Gastrocnemius medialis (tissue), 4 donors: ENCODE measurements at regions of chr11 and their contacts with region 1.

Region 1: DNA sequence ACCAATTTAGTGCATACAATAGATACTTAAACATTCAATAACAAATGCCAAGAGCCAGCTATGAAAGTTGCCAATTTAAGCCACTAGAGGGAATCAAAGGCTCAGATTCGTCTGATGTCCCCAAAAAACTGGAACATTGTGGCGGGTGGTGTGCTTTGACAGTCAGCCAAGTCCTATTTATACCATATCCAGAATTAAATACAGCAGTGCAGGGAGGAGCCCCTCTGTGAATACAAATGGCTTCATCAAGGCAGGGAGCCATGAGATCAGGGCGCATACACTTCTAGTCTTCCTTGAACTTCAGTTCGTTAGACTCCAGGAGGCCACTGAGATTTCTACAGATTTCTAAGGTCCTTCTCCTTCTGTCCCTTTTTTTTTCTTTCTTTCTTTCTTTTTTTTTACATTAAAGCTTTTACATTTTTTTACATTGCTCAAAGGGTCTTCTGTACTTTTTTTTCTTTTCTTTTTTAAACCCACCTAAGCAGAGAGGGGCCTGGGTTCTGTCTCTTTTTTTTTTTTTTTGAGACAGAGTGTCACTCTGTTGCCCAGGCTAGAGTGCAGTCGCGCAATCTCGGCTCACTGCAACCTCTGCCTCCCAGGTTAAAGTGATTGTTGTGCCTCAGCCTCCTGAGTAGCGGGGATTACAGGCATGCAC is 41.5 kb upstream of the HSPA8 start:
- DNase-seq: peak; percentile 33 to 48
- ATAC-seq: peak; percentile 64 to 65
- H3K4me3 ChIP-seq: no peak overlapping the region
- H3K27ac ChIP-seq: peak overlapping the region in 2 of 4 donors; percentile 34 to 48
- H3K4me1 ChIP-seq: peaks cover 14 to 16% of the 10 kb centered on the region in 2 donors
- H3K27me3 ChIP-seq: no peaks in the 10 kb centered on the region
- CTCF ChIP-seq: peak in 4 of 5 experiments; percentile 42 to 68 (median 51)
- POLR2A ChIP-seq: no peak

Region 2: DNA sequence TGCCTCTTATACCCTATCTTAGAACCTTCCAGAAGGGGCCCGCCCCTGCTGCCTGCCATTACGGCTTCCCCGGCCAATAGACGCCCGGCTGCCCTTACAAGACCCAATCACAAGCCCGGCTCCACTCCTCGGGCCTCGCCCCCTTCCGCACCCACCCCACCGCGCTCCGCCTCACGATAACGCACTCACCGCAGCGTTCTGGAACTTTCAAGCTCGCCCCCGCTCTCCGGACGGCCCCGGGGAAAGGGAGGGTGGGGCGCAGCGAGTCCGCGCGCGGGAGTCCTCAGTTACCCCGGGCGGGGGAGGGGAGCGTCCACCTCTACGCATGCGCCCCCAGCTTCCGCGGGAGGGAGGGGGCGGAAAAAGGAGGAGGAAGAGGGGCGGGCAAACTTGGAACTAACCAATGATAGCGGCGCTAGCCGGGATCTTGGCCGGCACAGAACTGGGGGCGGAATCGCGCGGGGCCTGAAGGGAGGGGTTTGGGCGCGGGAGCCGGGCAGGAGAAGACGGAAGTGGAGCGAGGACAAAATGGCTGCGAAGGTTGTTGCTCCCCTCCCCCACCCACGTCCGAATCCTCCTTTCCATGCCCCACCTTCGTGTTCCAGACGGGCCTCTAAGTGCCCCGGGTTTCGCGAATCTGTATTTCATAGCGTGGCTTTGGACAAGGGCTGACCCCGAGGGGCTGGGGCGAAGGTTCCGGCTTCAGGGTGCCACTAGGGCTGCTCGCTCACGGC is 41.1 kb before region 1 on chr11:
- in situ Hi-C with region 1: no loop called
- intact Hi-C with region 1: no loop called
- DNase-seq: peak; percentile 99
- ATAC-seq: peak; percentile 83 to 86
- H3K4me3 ChIP-seq: peak overlapping the region; percentile 88 to 99 (median 94)
- H3K27ac ChIP-seq: peak overlapping the region; percentile 97 to 99 (median 98)
- H3K4me1 ChIP-seq: peaks cover 58 to 64% of the 10 kb centered on the region in 2 donors
- H3K27me3 ChIP-seq: no peaks in the 10 kb centered on the region
- CTCF ChIP-seq: no peak
- POLR2A ChIP-seq: peak in 1 of 2 donors; percentile 54

Region 3: DNA sequence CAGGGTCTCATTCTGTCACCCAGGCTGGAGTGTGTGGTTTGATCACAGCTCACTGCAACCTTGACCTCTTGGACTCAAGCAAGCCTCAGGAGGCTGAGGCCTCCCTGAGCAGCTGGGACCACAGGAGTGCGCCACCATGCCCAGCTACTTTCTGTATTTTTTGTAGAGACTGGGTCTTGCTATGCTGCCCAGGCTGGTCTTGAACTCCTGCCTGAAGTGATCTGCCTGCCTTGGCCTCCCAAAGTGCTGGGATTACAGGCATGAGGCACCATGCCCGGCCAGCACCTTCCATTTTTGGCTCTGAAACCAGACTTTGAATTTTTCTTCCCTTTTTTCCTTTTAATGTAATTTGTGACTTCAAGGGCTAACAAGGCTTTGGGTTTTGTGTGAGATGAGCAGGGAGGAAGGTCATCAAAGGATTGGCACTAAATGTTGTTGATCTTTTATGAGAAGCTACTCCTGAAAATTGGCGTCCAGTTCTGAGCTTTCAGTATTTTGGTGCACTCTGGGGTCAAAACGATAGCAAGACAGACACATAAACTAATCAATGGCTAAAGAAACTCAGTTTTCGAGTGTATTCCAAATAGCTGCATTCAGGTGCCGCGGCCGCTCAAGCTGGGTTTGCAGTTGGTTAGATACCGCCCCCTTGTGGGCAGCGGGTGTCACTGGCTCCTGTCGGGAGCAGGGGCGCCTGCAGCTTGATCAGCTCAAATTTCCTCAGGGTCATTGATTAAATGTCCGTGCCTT is 143.5 kb after region 1 on chr11:
- in situ Hi-C with region 1: no loop called
- intact Hi-C with region 1: loop called (anchors 2 kb)
- DNase-seq: peak; percentile 45 to 55
- ATAC-seq: peak; percentile 70 to 84
- H3K4me3 ChIP-seq: peak overlapping the region in 2 of 4 donors; percentile 24 to 42
- H3K27ac ChIP-seq: no peak overlapping the region
- H3K4me1 ChIP-seq: peaks cover 0 to 6% of the 10 kb centered on the region in 2 donors
- H3K27me3 ChIP-seq: no peaks in the 10 kb centered on the region
- CTCF ChIP-seq: peak; percentile 82 to 99 (median 87)
- POLR2A ChIP-seq: no peak